Right ventricle myocardium inferior (tissue), 1 donor: ENCODE measurements at regions of chr1 and their contacts with region 1.

Region 1: GRCh38 chr1:6998267-6998666 is 213.0 kb downstream of the CAMTA1 start:
- DNase-seq: no peak
- ATAC-seq: peak; percentile 90

Region 2: GRCh38 chr1:6868660-6869380 is 129.4 kb before region 1 on chr1:
- intact Hi-C with region 1: no loop called
- DNase-seq: no peak
- ATAC-seq: no peak

Region 3: DNA sequence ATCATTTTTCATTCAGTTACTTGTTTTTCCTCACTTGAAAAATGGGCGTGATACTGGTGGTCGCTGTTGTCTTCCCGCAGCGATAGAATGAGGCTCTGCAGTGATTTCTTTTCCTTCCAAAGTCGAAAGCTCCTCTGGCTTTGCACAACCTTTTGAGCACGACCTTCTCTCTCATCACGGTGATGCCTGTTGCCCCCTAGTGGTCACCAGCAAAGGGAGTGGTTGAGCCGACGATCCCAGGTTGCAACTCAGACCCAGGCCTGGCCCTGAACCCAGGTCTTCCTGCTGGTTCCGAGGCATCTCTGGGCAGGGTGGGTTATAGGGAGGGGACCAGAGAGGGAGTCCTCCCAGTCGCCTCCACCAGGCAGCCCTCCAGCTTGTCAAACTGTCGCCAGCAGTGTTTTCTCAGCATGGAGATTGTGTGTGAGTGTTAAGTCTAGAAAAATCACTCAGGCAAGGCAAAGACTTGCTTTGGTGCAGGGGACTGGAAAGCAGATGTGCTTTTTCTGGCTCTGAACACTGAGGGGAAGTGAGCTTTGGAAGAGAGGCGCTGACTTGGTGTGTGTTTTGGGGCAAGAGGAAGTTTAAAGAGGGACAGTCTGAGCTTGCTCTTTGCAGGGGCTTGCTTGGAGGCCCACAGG is 72.2 kb after region 1 on chr1:
- intact Hi-C with region 1: loop called (anchors 2 kb)
- DNase-seq: no peak
- ATAC-seq: peak; percentile 73